Right lobe of liver (tissue), 6 donors: ENCODE measurements at regions of chr5 and their contacts with region 1.

Region 1: GRCh38 chr5:2017540-2018389 is 135.0 kb upstream of the IRX4 start:
- DNase-seq: no peak
- ATAC-seq: no peak
- H3K4me3 ChIP-seq: no peak overlapping the region
- H3K27ac ChIP-seq: no peak overlapping the region
- H3K4me1 ChIP-seq: no peaks in the 10 kb centered on the region
- H3K27me3 ChIP-seq: no peaks in the 10 kb centered on the region
- CTCF ChIP-seq: peak in 2 of 4 donors; percentile 11 to 28
- POLR2A ChIP-seq: no peak

Region 2: GRCh38 chr5:1633605-1634336 is 384.0 kb before region 1 on chr5:
- intact Hi-C with region 1: no loop called
- DNase-seq: peak; percentile 83 to 92 (median 90)
- ATAC-seq: peak; percentile 96 to 99 (median 99)
- H3K4me3 ChIP-seq: peak overlapping the region; percentile 70 to 90 (median 90)
- H3K27ac ChIP-seq: peak overlapping the region; percentile 74 to 83 (median 74)
- H3K4me1 ChIP-seq: no peaks in the 10 kb centered on the region
- H3K27me3 ChIP-seq: no peaks in the 10 kb centered on the region
- CTCF ChIP-seq: no peak
- POLR2A ChIP-seq: peak; percentile 78

Region 3: GRCh38 chr5:1763548-1763911 is 254.2 kb before region 1 on chr5:
- intact Hi-C with region 1: loop called in 1 of 2 experiments (anchors 10 kb)
- DNase-seq: peak; percentile 48 to 59 (median 54)
- ATAC-seq: peak; percentile 76 to 82 (median 80)
- H3K4me3 ChIP-seq: no peak overlapping the region
- H3K27ac ChIP-seq: no peak overlapping the region
- H3K4me1 ChIP-seq: no peaks in the 10 kb centered on the region
- H3K27me3 ChIP-seq: no peaks in the 10 kb centered on the region
- CTCF ChIP-seq: peak; percentile 41 to 62 (median 58)
- POLR2A ChIP-seq: no peak

Region 4: DNA sequence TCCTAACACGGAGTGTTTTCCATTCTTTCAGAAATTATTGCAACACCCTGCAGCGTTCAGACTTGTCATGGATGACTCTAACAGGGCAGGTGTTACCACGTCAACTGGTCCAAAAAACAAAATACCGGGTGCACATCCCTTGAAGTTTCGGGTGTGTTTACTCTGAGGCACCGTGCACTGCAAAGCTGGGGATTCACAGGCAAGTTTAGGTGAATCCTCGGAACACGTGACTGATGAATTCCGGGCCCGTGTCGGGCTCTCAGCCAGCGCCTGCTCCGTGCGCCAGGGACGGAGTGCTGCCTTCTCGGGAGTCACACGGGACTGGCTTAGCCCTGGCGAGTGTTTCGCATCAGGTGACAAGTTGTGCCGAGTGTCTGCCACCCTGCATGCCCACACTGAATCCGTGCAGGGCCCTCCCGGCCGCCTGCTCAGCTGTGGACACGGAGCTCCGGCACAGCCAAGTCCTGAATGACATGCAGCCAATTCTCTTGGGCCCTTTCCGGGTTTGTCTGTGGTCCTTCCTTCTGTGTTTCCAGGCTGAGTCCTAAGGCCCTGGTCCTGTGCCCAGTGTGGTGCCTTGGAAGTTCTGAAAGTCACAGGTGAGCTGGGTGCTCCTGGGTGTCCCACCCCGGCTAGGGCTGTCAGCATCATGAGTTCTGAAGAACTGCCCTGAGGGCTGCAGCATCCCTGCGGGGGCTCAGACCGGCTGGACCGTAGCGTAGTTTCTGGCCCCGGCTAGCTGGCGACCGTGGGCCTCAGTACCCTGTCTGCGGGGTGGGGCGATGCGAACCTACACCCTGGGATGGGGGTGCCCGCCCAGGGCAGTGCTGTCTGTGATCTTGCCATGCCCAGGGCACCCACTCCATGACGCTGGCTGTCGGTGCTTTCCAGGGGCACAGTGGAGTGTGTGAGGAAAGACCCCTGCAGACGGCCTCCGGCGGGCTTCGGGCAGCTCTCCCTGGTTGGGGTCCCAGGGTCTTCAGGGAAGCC is 68.8 kb before region 1 on chr5:
- intact Hi-C with region 1: no loop called
- DNase-seq: peak in 1 of 3 donors; percentile 36
- ATAC-seq: no peak
- H3K4me3 ChIP-seq: no peak overlapping the region
- H3K27ac ChIP-seq: no peak overlapping the region
- H3K4me1 ChIP-seq: no peaks in the 10 kb centered on the region
- H3K27me3 ChIP-seq: no peaks in the 10 kb centered on the region
- CTCF ChIP-seq: no peak
- POLR2A ChIP-seq: no peak

Region 5: DNA sequence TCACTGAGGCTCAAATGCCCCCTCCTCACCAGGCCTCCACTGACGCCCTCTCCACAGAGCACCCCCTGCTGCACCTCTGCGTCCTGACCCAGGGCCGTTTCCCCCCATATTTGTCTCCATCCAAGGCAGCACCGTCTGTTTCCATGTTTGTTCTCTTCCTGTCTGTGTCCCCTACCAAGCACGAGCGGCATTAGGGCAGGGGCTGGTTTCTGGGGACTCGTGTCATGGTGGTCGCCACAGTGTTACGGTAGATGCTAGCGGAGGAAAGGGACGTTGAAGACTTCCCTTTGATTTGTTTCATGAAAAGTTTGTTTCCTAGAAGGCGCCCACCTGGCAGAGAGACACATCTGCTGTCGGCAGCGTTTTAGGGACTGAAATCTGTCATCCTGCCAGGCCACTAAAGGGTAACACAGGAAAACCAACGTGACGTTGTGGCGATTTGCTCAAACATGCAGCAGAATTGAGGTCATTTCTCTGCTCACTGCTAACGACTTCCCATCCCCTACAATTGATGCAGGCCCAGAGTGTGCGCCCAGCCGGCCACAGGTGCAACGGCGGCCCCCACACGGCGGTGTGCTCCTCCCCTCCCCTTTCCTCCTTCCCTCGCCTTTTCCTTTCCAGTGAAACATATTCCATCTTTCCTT is 55.7 kb before region 1 on chr5:
- intact Hi-C with region 1: no loop called
- DNase-seq: no peak
- ATAC-seq: no peak
- H3K4me3 ChIP-seq: no peak overlapping the region
- H3K27ac ChIP-seq: no peak overlapping the region
- H3K4me1 ChIP-seq: no peaks in the 10 kb centered on the region
- H3K27me3 ChIP-seq: no peaks in the 10 kb centered on the region
- CTCF ChIP-seq: no peak
- POLR2A ChIP-seq: no peak